ENCODE measurements at regions of chr6 and their contacts with region 1.

Region 1: DNA sequence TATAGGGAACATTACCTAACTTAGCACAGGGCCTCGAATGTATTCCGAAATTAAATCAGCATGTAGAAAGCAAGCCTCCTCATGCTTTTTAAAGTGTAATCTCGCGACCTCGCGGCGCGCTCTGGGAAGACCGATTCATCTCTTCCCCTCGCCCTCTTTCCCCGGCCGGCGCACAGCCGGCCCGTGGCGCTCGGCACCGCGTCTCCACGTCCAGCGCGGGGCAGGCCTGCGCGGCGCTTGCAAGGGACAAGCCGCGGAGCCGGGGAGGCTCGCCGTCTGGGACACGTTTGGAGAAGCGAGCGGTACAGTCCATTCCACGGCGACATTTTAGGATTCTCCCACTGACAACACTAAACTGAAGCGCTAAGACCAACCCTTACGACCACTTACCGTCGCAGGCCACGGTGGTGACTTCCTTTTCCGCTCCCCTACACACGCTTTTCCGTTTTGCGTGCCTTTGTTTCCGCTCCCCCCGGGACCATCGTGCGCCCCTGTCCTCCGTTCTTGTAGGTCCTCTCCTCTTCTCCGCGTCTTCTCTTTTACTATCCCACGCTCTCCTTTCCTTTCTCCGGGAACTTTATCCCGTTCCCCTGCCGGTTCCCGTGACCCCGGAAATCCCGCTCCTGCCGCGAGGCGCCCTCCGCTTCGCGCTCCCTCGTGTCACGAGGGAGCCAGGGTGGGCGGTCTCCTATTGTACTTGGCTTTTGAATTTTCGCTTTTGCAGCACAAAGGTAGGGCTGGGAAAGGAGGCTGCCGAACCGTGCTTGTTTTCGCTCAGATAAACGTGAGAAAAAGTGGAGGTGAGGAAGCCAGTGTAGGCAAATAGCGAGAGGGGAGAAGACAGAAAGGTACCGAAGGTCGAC is at the start of gene ECHDC1:
- DNase-seq: peak; percentile 26 to 44
- ATAC-seq: peak; percentile 83 to 84
- H3K4me3 ChIP-seq: peak within 1 kb of the TSS; percentile 72 to 91 (median 78)
- H3K27ac ChIP-seq: peak within 1 kb of the TSS; percentile 80 to 88 (median 82)
- H3K4me1 ChIP-seq: peaks cover 13 to 32% of the 10 kb centered on the region in 2 donors
- H3K27me3 ChIP-seq: no peaks in the 10 kb centered on the region
- CTCF ChIP-seq: peak in 2 of 5 experiments; percentile 16 to 18
- POLR2A ChIP-seq: peak; percentile 19 to 33
- total RNA-seq, gene ECHDC1: 31.4 to 45.3 (median 33.6) TPM

Region 2: GRCh38 chr6:127186889-127187288 is 156.3 kb before region 1 on chr6:
- in situ Hi-C with region 1: no loop called
- intact Hi-C with region 1: loop called (anchors 5 kb)
- DNase-seq: peak; percentile 6 to 58
- ATAC-seq: no peak
- H3K4me3 ChIP-seq: no peak overlapping the region
- H3K27ac ChIP-seq: peak overlapping the region in 2 of 4 donors; percentile 74 to 78
- H3K4me1 ChIP-seq: peaks cover 26 to 29% of the 10 kb centered on the region in 2 donors
- H3K27me3 ChIP-seq: no peaks in the 10 kb centered on the region
- CTCF ChIP-seq: peak; percentile 15 to 45 (median 22)
- POLR2A ChIP-seq: no peak

Region 3: GRCh38 chr6:127420556-127420955 is 77.4 kb after region 1 on chr6:
- in situ Hi-C with region 1: no loop called
- intact Hi-C with region 1: loop called (anchors 1 kb)
- DNase-seq: peak; percentile 40 to 52
- ATAC-seq: peak; percentile 95 to 99
- H3K4me3 ChIP-seq: no peak overlapping the region
- H3K27ac ChIP-seq: no peak overlapping the region
- H3K4me1 ChIP-seq: peaks cover 0 to 6% of the 10 kb centered on the region in 2 donors
- H3K27me3 ChIP-seq: no peaks in the 10 kb centered on the region
- CTCF ChIP-seq: no peak
- POLR2A ChIP-seq: no peak

Region 4: GRCh38 chr6:127459231-127459641 is 116.1 kb after region 1 on chr6 and contains the start of gene KIAA0408:
- in situ Hi-C with region 1: loop called in 1 of 4 experiments (anchors 10 kb)
- intact Hi-C with region 1: loop called (anchors 2 kb)
- DNase-seq: peak; percentile 87 to 88
- ATAC-seq: peak; percentile 92 to 93
- H3K4me3 ChIP-seq: peak within 1 kb of the TSS; percentile 48 to 76 (median 61)
- H3K27ac ChIP-seq: peak within 1 kb of the TSS; percentile 88 to 94 (median 91)
- H3K4me1 ChIP-seq: peaks cover 55 to 74% of the 10 kb centered on the region in 2 donors
- H3K27me3 ChIP-seq: no peaks in the 10 kb centered on the region
- CTCF ChIP-seq: no peak
- POLR2A ChIP-seq: peak; percentile 35 to 93
- total RNA-seq, gene KIAA0408: 34.0 to 57.4 (median 44.8) TPM

Region 5: GRCh38 chr6:127539272-127539671 is 196.1 kb after region 1 on chr6:
- in situ Hi-C with region 1: loop called in 1 of 4 experiments (anchors 25 kb)
- intact Hi-C with region 1: no loop called
- DNase-seq: no peak
- ATAC-seq: peak; percentile 39 to 60
- H3K4me3 ChIP-seq: no peak overlapping the region
- H3K27ac ChIP-seq: no peak overlapping the region
- H3K4me1 ChIP-seq: no peaks in the 10 kb centered on the region
- H3K27me3 ChIP-seq: no peaks in the 10 kb centered on the region
- CTCF ChIP-seq: peak in 4 of 5 experiments; percentile 34 to 51 (median 40)
- POLR2A ChIP-seq: no peak

Region 6: GRCh38 chr6:127606131-127606562 is 263.0 kb after region 1 on chr6:
- in situ Hi-C with region 1: no loop called
- intact Hi-C with region 1: no loop called
- DNase-seq: no peak
- ATAC-seq: no peak
- H3K4me3 ChIP-seq: no peak overlapping the region
- H3K27ac ChIP-seq: no peak overlapping the region
- H3K4me1 ChIP-seq: no peaks in the 10 kb centered on the region
- H3K27me3 ChIP-seq: no peaks in the 10 kb centered on the region
- CTCF ChIP-seq: no peak
- POLR2A ChIP-seq: no peak

Region 7: DNA sequence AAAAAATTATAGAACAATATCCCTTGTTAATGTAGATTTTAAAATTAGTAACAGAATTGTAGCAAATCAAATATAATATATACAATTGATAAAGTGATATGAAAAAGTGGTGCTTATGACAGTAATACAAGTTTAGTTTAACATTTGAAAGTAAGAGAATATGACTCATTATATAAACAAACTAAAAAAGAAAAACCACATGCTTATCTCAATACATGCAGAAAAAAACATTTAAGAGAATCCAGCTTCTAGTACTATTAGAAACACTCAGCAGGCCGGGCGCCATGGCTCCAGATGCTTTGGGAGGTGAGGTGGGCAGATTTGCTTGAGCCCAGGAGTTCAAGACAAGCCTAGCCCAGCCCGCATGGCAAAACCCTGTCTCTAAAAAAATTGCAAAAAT is 1479.1 kb after region 1 on chr6:
- in situ Hi-C with region 1: no loop called
- intact Hi-C with region 1: no loop called
- DNase-seq: no peak
- ATAC-seq: no peak
- H3K4me3 ChIP-seq: no peak overlapping the region
- H3K27ac ChIP-seq: no peak overlapping the region
- H3K4me1 ChIP-seq: no peaks in the 10 kb centered on the region
- H3K27me3 ChIP-seq: no peaks in the 10 kb centered on the region
- CTCF ChIP-seq: no peak
- POLR2A ChIP-seq: no peak